Common myeloid progenitor, CD34-positive (primary cell): ENCODE measurements at regions of chr10 and their contacts with region 1.

Region 1: GRCh38 chr10:132421392-132421877 is 24.4 kb downstream of the PWWP2B start:
- DNase-seq: peak; percentile 41 to 83 (median 74)
- H3K4me3 ChIP-seq: peak overlapping the region in 4 of 7 experiments; percentile 39 to 60 (median 47)
- H3K27ac ChIP-seq: peak overlapping the region; percentile 33 to 79
- H3K4me1 ChIP-seq: peaks cover 4 to 76% (median 68%) of the 10 kb centered on the region in 4 experiments
- H3K27me3 ChIP-seq: no peaks in the 10 kb centered on the region

Region 2: GRCh38 chr10:132407814-132408278 is 13.6 kb before region 1 on chr10:
- CTCF ChIA-PET with region 1: interaction called, 86 read pairs
- POLR2A ChIA-PET with region 1: interaction called, 15 read pairs
- DNase-seq: peak in 2 of 3 donors; percentile 58 to 72
- H3K4me3 ChIP-seq: peak overlapping the region in 5 of 7 experiments; percentile 26 to 63 (median 46)
- H3K27ac ChIP-seq: peak overlapping the region in 1 of 2 experiments; percentile 34
- H3K4me1 ChIP-seq: peaks cover 3 to 60% (median 55%) of the 10 kb centered on the region in 4 experiments
- H3K27me3 ChIP-seq: no peaks in the 10 kb centered on the region

Region 3: DNA sequence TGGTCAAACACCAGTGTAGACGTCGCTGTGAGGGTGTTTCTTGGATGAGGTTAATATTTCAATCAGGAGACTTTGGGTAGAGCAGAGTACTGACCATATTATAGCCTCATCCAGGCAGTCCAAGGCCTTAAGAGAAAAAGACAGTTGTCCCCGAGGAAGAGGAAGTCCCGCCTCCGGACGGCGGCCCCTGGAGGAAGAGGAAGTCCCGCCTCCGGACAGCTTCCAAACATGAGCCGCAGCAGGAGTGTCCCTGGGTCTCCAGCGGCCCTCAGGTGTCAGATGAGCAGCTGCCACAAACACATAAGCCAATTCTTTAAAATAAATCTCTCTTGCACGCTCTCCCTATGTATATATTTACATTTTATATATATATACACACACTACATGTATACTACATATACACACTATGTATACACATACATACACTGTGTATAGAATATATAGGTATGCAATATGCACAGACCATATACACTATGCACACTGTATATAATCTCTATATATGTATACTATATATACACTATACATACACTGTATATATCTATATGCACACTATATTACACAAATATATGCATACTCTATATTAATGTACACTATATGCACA is 13.1 kb after region 1 on chr10:
- CTCF ChIA-PET with region 1: interaction called, 37 read pairs
- POLR2A ChIA-PET with region 1: interaction called, 6 read pairs
- DNase-seq: peak; percentile 66 to 85 (median 80)
- H3K4me3 ChIP-seq: peak overlapping the region in 3 of 7 experiments; percentile 10 to 48 (median 39)
- H3K27ac ChIP-seq: peak overlapping the region in 1 of 2 experiments; percentile 16
- H3K4me1 ChIP-seq: peaks cover 2 to 43% (median 24%) of the 10 kb centered on the region in 4 experiments
- H3K27me3 ChIP-seq: no peaks in the 10 kb centered on the region